ENCODE measurements at regions of chr3 and their contacts with region 1.

Region 1: GRCh38 chr3:130276203-130276803 is 69.2 kb upstream of the COL6A5 start:
- DNase-seq: peak in 3 of 14 experiments; percentile 19 to 36 (median 33)
- ATAC-seq: peak; percentile 44
- H3K4me3 ChIP-seq: no peak overlapping the region
- H3K4me3 Mint-ChIP-seq: no peak overlapping the region
- H3K27ac ChIP-seq: no peak overlapping the region
- H3K27ac Mint-ChIP-seq: no peak overlapping the region
- H3K4me1 ChIP-seq: no peaks in the 10 kb centered on the region
- H3K4me1 Mint-ChIP-seq: no peaks in the 10 kb centered on the region
- H3K27me3 ChIP-seq: peaks cover 0 to 11% of the 10 kb centered on the region in 2 experiments
- H3K27me3 Mint-ChIP-seq: peaks cover 46% of the 10 kb centered on the region
- CTCF ChIP-seq: peak; percentile 61

Region 2: DNA sequence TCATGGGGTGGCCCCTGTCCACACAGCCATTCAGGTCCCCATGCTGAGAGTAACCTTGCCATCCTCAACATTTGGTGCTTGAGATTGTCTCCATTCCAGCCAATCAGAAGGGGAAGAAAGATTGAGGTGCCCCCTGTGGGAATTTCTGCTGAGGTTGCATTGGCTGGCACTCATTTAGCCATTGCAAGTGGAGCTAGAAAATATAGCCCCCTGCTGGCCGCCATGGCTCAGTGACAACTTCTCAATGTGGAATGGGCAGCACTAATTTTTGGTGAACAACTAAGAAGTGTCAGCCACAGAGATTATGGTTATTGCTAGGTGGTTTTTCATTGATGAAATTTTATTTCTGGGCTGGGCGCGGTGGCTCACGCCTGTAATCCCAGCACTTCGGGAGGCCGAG is 262.7 kb after region 1 on chr3:
- CTCF ChIA-PET with region 1: no interaction called
- POLR2A ChIA-PET with region 1: no interaction called
- intact Hi-C with region 1: loop called in 1 of 2 experiments (anchors 5 kb)
- DNase-seq: peak in 9 of 14 experiments; percentile 3 to 54 (median 21)
- ATAC-seq: no peak
- H3K4me3 ChIP-seq: no peak overlapping the region
- H3K4me3 Mint-ChIP-seq: no peak overlapping the region
- H3K27ac ChIP-seq: no peak overlapping the region
- H3K27ac Mint-ChIP-seq: no peak overlapping the region
- H3K4me1 ChIP-seq: no peaks in the 10 kb centered on the region
- H3K4me1 Mint-ChIP-seq: no peaks in the 10 kb centered on the region
- H3K27me3 ChIP-seq: no peaks in the 10 kb centered on the region
- H3K27me3 Mint-ChIP-seq: peaks cover 12% of the 10 kb centered on the region
- CTCF ChIP-seq: peak; percentile 51

Measured in CD4-positive, alpha-beta T cell (primary cell).